MCF 10A (cell line): ENCODE measurements at regions of chr17 and their contacts with region 1.

Region 1: DNA sequence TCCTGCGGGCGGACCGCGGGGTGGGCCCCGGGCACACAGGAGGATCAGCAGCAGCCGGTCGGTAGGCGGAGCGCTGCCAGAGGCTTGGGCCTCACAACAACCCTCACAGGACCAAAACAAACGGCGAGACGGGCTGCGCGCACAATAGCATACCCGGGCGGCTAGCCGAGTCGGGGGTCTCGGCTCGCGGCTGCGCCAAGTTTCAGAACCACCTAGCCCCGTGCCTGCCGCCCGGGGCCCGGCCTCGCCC is 747 bp downstream of the ULK2 start:
- DNase-seq: peak; percentile 64
- H3K4me3 Mint-ChIP-seq: peak overlapping the region; percentile 76
- H3K27ac Mint-ChIP-seq: peak overlapping the region; percentile 75
- H3K4me1 Mint-ChIP-seq: peaks cover 5% of the 10 kb centered on the region
- H3K27me3 Mint-ChIP-seq: no peaks in the 10 kb centered on the region
- CTCF ChIP-seq: peak; percentile 1

Region 2: GRCh38 chr17:19897901-19898300 is 30.9 kb after region 1 on chr17:
- CTCF ChIA-PET with region 1: no interaction called
- POLR2A ChIA-PET with region 1: interaction called, 6 read pairs
- intact Hi-C with region 1: loop called (anchors 2 kb)
- DNase-seq: peak; percentile 61
- H3K4me3 Mint-ChIP-seq: no peak overlapping the region
- H3K27ac Mint-ChIP-seq: peak overlapping the region; percentile 79
- H3K4me1 Mint-ChIP-seq: peaks cover 27% of the 10 kb centered on the region
- H3K27me3 Mint-ChIP-seq: no peaks in the 10 kb centered on the region
- CTCF ChIP-seq: no peak

Region 3: DNA sequence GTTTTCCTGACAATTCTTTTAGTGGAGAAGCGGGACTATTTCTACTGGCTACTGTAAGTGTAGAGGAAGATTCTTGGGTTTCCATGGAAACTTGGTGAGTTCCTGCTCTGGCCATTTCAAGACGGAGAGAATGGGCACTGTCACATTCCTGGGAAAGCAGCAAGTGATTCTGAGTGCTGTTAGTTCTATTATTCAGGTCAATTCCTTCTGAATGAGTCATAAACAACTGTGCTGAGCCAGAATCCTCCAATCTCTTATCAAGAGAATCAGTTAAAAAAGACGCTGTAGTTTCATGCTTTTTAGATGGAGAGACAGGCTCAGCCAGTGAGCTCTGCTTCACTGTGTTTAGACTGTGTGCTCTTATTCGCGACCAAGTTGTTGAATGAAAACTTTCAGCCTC is 91.0 kb after region 1 on chr17:
- CTCF ChIA-PET with region 1: no interaction called
- POLR2A ChIA-PET with region 1: no interaction called
- intact Hi-C with region 1: no loop called
- DNase-seq: peak; percentile 54
- H3K4me3 Mint-ChIP-seq: no peak overlapping the region
- H3K27ac Mint-ChIP-seq: peak overlapping the region; percentile 64
- H3K4me1 Mint-ChIP-seq: peaks cover 18% of the 10 kb centered on the region
- H3K27me3 Mint-ChIP-seq: no peaks in the 10 kb centered on the region
- CTCF ChIP-seq: no peak

Region 4: GRCh38 chr17:19977311-19978208 is 110.6 kb after region 1 on chr17 and contains the start of gene AKAP10:
- CTCF ChIA-PET with region 1: no interaction called
- POLR2A ChIA-PET with region 1: interaction called, 4 read pairs
- intact Hi-C with region 1: loop called (anchors 5 kb)
- DNase-seq: peak; percentile 85
- H3K4me3 Mint-ChIP-seq: peak within 1 kb of the TSS; percentile 82
- H3K27ac Mint-ChIP-seq: peak within 1 kb of the TSS; percentile 81
- H3K4me1 Mint-ChIP-seq: peaks cover 9% of the 10 kb centered on the region
- H3K27me3 Mint-ChIP-seq: no peaks in the 10 kb centered on the region
- CTCF ChIP-seq: no peak
- total RNA-seq, gene AKAP10: 33.7 and 34.1 TPM in 2 replicates